Activated T-helper 1 cell treated with anti-CD3 and anti-CD28 coated beads, Interleukin-12 subunit alpha, Interleukin-12 subunit beta, Interleukin-2, Interleukin-4 antibody, amounts not matched to agents 30 ng/mL and 10 ng/mL and 1 ng/mL, durations not matched to agents 14 hours and 24 hours and 36 hours (primary cell): ENCODE measurements at regions of chr13 and their contacts with region 1.

Region 1: GRCh38 chr13:25886438-25887214 is 165.2 kb downstream of the SHISA2 start:
- DNase-seq: peak; percentile 14
- H3K4me3 Mint-ChIP-seq: no peak overlapping the region
- H3K27ac Mint-ChIP-seq: peak overlapping the region; percentile 75
- H3K4me1 Mint-ChIP-seq: peaks cover 71% of the 10 kb centered on the region
- H3K27me3 Mint-ChIP-seq: peaks cover 5% of the 10 kb centered on the region

Region 2: GRCh38 chr13:24709186-24709913 is 1177.3 kb before region 1 on chr13:
- intact Hi-C with region 1: no loop called
- DNase-seq: peak; percentile 66
- H3K4me3 Mint-ChIP-seq: peak overlapping the region; percentile 47
- H3K27ac Mint-ChIP-seq: peak overlapping the region; percentile 28
- H3K4me1 Mint-ChIP-seq: peaks cover 19% of the 10 kb centered on the region
- H3K27me3 Mint-ChIP-seq: peaks cover 4% of the 10 kb centered on the region

Region 3: DNA sequence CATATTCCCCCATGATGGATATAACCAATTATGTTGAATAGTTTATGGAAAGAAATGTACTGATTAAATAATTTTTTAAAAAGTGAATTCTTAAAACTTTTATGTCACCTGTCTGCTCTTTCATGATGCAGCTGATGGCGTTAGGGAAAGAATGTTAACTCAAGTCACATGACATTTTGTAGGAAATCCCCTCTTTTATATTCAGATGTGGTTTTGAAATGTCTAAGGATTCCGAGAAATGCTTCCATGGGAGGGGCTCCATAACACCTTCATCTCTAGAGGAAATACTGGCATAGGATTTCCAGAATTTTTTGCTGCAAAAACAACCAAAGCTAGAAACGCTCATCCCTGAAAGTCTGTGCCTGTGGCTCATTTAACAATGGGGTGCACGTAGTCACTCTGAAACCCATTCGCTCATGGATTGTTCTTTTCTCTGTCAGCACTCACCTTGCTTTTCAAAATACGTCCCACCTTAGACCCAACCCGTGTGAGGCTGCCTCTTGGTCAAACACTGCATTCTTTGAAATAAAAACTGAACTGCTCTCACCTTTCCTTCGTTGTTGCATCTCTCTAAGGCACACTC is 123.7 kb before region 1 on chr13:
- intact Hi-C with region 1: loop called (anchors 1 kb)
- DNase-seq: peak; percentile 19
- H3K4me3 Mint-ChIP-seq: peak overlapping the region; percentile 55
- H3K27ac Mint-ChIP-seq: peak overlapping the region; percentile 93
- H3K4me1 Mint-ChIP-seq: peaks cover 51% of the 10 kb centered on the region
- H3K27me3 Mint-ChIP-seq: no peaks in the 10 kb centered on the region

Region 4: DNA sequence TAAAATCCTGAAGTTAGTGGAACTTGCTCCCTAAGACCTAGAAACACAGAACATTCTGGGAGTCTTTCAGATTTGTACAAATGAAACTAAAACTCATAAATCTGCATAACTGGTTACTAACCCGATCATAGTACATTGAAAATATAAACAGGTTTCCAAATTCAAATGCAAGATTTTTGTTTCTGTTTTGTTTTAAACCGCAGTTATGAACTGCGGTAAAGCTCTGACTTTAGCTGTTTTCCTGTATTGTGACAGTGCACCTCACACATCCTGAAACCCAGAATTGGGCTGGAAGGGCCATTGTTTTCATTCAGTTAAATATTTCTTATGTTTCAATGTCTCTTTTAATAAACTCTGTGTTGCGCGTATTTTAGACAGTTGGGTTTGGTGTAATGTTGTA is 39.5 kb before region 1 on chr13:
- intact Hi-C with region 1: loop called (anchors 1 kb)
- DNase-seq: peak; percentile 12
- H3K4me3 Mint-ChIP-seq: peak overlapping the region; percentile 54
- H3K27ac Mint-ChIP-seq: peak overlapping the region; percentile 79
- H3K4me1 Mint-ChIP-seq: peaks cover 62% of the 10 kb centered on the region
- H3K27me3 Mint-ChIP-seq: peaks cover 5% of the 10 kb centered on the region

Region 5: GRCh38 chr13:25860845-25861244 is 25.8 kb before region 1 on chr13:
- intact Hi-C with region 1: no loop called
- DNase-seq: no peak
- H3K4me3 Mint-ChIP-seq: no peak overlapping the region
- H3K27ac Mint-ChIP-seq: no peak overlapping the region
- H3K4me1 Mint-ChIP-seq: peaks cover 5% of the 10 kb centered on the region
- H3K27me3 Mint-ChIP-seq: peaks cover 8% of the 10 kb centered on the region

Region 6: GRCh38 chr13:25971459-25972145 is 85.0 kb after region 1 on chr13:
- intact Hi-C with region 1: loop called (anchors 1 kb)
- DNase-seq: peak; percentile 37
- H3K4me3 Mint-ChIP-seq: no peak overlapping the region
- H3K27ac Mint-ChIP-seq: peak overlapping the region; percentile 50
- H3K4me1 Mint-ChIP-seq: peaks cover 55% of the 10 kb centered on the region
- H3K27me3 Mint-ChIP-seq: no peaks in the 10 kb centered on the region

Region 7: GRCh38 chr13:26051657-26052311 is 165.2 kb after region 1 on chr13 and contains the start of gene SHISA2:
- intact Hi-C with region 1: loop called (anchors 2 kb)
- DNase-seq: peak; percentile 15
- H3K4me3 Mint-ChIP-seq: peak within 1 kb of the TSS; percentile 81
- H3K27ac Mint-ChIP-seq: peak within 1 kb of the TSS; percentile 72
- H3K4me1 Mint-ChIP-seq: peaks cover 35% of the 10 kb centered on the region
- H3K27me3 Mint-ChIP-seq: peaks cover 49% of the 10 kb centered on the region
- total RNA-seq, gene SHISA2: 9.4 and 9.5 TPM in 2 replicates